Caco-2 (cell line): ENCODE measurements at regions of chr21 and their contacts with region 1.

Region 1: GRCh38 chr21:34908419-34909055 is 140.6 kb downstream of the RUNX1 start:
- DNase-seq: peak; percentile 92 to 94
- H3K4me3 ChIP-seq: no peak overlapping the region
- H3K4me3 Mint-ChIP-seq: peak overlapping the region; percentile 65
- H3K27ac Mint-ChIP-seq: peak overlapping the region; percentile 83
- H3K4me1 ChIP-seq: peaks cover 19% of the 10 kb centered on the region
- H3K4me1 Mint-ChIP-seq: peaks cover 32% of the 10 kb centered on the region
- H3K27me3 ChIP-seq: no peaks in the 10 kb centered on the region; the same call in 1 of the 2 replicates
- H3K27me3 Mint-ChIP-seq: no peaks in the 10 kb centered on the region
- CTCF ChIP-seq: no peak

Region 2: GRCh38 chr21:34888569-34889319 is 19.8 kb before region 1 on chr21:
- CTCF ChIA-PET with region 1: no interaction called
- POLR2A ChIA-PET with region 1: no interaction called
- intact Hi-C with region 1: loop called (anchors 1 kb)
- DNase-seq: peak; percentile 93 to 94
- H3K4me3 ChIP-seq: peak overlapping the region; percentile 78
- H3K4me3 Mint-ChIP-seq: peak overlapping the region; percentile 93
- H3K27ac Mint-ChIP-seq: peak overlapping the region; percentile 83
- H3K4me1 ChIP-seq: no peaks in the 10 kb centered on the region
- H3K4me1 Mint-ChIP-seq: no peaks in the 10 kb centered on the region
- H3K27me3 ChIP-seq: peaks cover 2% of the 10 kb centered on the region; the same call in 1 of the 2 replicates
- H3K27me3 Mint-ChIP-seq: no peaks in the 10 kb centered on the region
- CTCF ChIP-seq: no peak

Region 3: GRCh38 chr21:35019631-35020032 is 111.1 kb after region 1 on chr21:
- CTCF ChIA-PET with region 1: no interaction called
- POLR2A ChIA-PET with region 1: no interaction called
- intact Hi-C with region 1: loop called (anchors 2 kb)
- DNase-seq: peak; percentile 80 to 88
- H3K4me3 ChIP-seq: no peak overlapping the region
- H3K4me3 Mint-ChIP-seq: peak overlapping the region; percentile 48
- H3K27ac Mint-ChIP-seq: peak overlapping the region; percentile 70
- H3K4me1 ChIP-seq: peaks cover 51% of the 10 kb centered on the region
- H3K4me1 Mint-ChIP-seq: peaks cover 28% of the 10 kb centered on the region
- H3K27me3 ChIP-seq: no peaks in the 10 kb centered on the region
- H3K27me3 Mint-ChIP-seq: no peaks in the 10 kb centered on the region
- CTCF ChIP-seq: no peak

Region 4: DNA sequence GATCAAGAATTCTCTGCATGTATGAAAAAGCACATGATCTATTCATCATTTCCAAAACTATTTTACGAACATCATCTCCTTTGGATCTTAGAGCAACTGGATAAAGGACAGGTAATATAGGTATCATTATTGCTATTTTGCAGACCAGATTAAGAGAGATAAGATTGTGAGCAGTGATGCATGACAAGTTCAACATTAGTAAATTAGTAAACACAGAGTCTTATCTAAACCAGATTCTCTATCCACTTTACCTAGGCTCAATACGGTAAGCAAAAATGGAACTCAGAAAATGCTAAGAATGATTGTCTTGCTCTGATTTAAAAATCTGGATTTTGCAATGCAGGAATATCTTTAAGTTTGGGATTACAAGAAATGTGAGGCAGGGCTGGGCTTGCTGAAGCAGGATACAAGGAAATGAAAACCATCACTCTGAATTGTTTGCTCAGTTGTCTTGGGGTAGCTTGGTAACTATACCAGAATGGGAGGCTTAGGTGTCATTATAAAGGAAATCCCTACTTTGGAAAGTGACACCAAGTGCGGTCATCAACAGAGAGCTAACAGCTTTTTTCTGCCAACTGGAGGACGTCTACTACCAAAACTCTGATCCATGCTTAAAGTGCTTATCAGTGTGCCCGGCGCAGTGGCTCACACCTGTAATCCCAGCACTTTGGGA is 473.2 kb after region 1 on chr21:
- CTCF ChIA-PET with region 1: no interaction called
- POLR2A ChIA-PET with region 1: no interaction called
- intact Hi-C with region 1: loop called (anchors 1 kb)
- DNase-seq: peak in 1 of 2 experiments; percentile 9
- H3K4me3 ChIP-seq: no peak overlapping the region
- H3K4me3 Mint-ChIP-seq: no peak overlapping the region
- H3K27ac Mint-ChIP-seq: no peak overlapping the region
- H3K4me1 ChIP-seq: peaks cover 7% of the 10 kb centered on the region; the same call in 1 of the 2 replicates
- H3K4me1 Mint-ChIP-seq: peaks cover 8% of the 10 kb centered on the region
- H3K27me3 ChIP-seq: no peaks in the 10 kb centered on the region
- H3K27me3 Mint-ChIP-seq: no peaks in the 10 kb centered on the region
- CTCF ChIP-seq: no peak